ENCODE measurements at regions of chr11 and their contacts with region 1.

Region 1: GRCh38 chr11:109264128-109264527 is 157.9 kb upstream of the C11orf87 start:
- DNase-seq: no peak
- ATAC-seq: no peak
- H3K4me3 ChIP-seq: no peak overlapping the region
- H3K27ac ChIP-seq: no peak overlapping the region
- H3K4me1 ChIP-seq: no peaks in the 10 kb centered on the region
- H3K27me3 ChIP-seq: no peaks in the 10 kb centered on the region
- CTCF ChIP-seq: no peak

Region 2: DNA sequence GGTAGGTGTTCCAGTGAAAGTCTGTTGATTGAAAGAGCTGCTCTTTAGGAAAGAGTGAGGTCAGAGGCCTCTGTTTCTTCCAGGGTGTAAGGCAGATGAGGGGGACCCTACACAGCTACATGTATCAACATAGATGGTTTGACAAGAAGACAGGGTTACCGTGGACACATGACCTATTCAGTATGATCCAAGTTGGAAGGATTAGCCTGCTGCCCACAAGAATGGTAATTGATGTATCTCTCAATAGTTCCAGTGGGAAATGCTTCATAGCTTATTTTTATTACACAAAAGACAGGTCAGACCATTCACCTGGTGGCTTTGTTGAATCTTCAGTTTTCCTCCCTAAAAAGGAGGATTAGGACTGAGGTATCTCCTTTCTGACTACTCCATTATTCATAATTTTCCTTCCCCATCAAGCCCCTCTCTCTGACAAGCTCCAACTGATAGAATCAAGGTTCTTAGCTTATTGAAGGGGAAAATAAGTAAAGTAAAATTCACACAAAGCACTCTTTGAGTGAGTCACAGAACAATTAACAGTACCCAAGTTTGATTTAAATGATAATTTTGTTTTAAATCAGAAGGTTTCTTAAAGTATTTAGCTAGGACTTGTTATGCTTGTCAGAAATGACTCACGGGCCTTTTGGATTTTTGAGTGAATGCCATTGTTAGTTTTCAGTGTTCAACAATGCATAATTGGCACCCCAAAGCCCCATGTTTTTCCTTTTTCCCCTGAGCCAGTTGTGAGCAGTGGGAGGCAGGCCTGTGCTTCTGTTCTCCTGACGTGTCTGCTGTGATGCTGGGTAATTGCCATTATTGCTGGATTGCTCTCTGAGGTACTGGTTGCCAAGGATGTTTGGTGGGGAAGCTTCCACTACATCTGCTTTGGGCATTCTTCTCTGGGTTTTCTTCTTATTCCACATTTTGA is 226.0 kb before region 1 on chr11:
- intact Hi-C with region 1: no loop called
- DNase-seq: no peak
- ATAC-seq: no peak
- H3K4me3 ChIP-seq: no peak overlapping the region
- H3K27ac ChIP-seq: no peak overlapping the region
- H3K4me1 ChIP-seq: no peaks in the 10 kb centered on the region
- H3K27me3 ChIP-seq: no peaks in the 10 kb centered on the region
- CTCF ChIP-seq: no peak

Region 3: GRCh38 chr11:109527496-109527895 is 263.4 kb after region 1 on chr11:
- intact Hi-C with region 1: no loop called
- DNase-seq: no peak
- ATAC-seq: no peak
- H3K4me3 ChIP-seq: no peak overlapping the region
- H3K27ac ChIP-seq: no peak overlapping the region
- H3K4me1 ChIP-seq: no peaks in the 10 kb centered on the region
- H3K27me3 ChIP-seq: no peaks in the 10 kb centered on the region
- CTCF ChIP-seq: no peak

Region 4: DNA sequence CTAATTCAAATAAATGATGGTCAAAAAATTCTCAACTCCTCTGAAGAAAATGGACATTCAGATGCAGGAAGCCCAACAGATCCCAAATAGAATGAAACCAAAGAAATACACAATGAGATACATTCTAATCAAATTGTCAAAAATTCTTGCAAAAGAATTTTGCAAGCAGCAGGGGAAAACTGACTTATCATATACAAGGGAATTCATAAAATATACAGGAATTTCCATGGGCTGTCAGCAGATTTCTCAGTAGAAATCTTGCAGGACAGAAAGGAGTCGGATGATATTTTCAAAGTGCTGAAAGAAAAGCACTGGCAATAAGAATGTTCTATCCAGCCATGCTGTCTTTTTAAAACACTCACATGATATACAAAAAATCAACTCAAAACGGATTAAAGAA is 634.5 kb after region 1 on chr11:
- intact Hi-C with region 1: loop called in 1 of 10 experiments (anchors 5 kb)
- DNase-seq: no peak
- ATAC-seq: no peak
- H3K4me3 ChIP-seq: no peak overlapping the region
- H3K27ac ChIP-seq: no peak overlapping the region
- H3K4me1 ChIP-seq: no peaks in the 10 kb centered on the region
- H3K27me3 ChIP-seq: peaks cover 0 to 2% (median 0%) of the 10 kb centered on the region in 7 donors
- CTCF ChIP-seq: no peak

Measured in heart right ventricle (tissue), 16 donors.